PC-3 (cell line): ENCODE measurements at regions of chr17 and their contacts with region 1.

Region 1: GRCh38 chr17:28335201-28335955 is at the starts of genes IFT20 and TNFAIP1:
- DNase-seq: peak; percentile 97
- ATAC-seq: peak; percentile 95
- H3K4me3 ChIP-seq: peak within 1 kb of the TSS; percentile 97
- H3K27ac ChIP-seq: peak within 1 kb of the TSS; percentile 78
- H3K4me1 ChIP-seq: peaks cover 25% of the 10 kb centered on the region
- H3K27me3 ChIP-seq: no peaks in the 10 kb centered on the region
- CTCF ChIP-seq: no peak
- total RNA-seq, gene IFT20: 12.9 and 23.1 TPM in 2 replicates
- total RNA-seq, gene TNFAIP1: 18.8 and 27.5 TPM in 2 replicates

Region 2: DNA sequence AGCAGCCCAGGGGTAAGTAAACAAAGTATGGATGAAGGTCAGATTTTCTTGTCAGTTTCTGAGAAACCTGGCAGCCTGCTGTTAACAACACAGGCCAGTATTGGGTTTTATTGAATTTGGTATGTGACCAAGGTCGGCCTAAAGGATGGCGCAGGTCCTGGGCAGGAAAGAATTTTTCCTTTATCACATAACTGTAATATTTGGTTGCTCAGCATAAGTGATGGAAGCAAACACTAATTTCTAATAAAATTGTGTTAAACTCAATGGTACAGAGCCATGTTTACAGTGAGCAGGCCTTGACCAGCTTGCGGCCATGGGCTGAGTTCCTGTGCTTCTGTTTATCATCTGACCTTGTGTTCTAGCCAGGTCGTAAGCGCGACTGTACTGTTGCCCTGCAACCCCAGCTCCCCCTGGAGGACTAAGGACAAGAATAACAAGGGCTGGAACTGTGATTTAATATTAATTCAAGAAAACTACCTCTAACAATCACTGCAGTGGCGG is 11.4 kb after region 1 on chr17:
- CTCF ChIA-PET with region 1: interaction called, 5 read pairs
- POLR2A ChIA-PET with region 1: interaction called, 14 read pairs
- intact Hi-C with region 1: no loop called
- DNase-seq: no peak
- ATAC-seq: peak; percentile 57
- H3K4me3 ChIP-seq: peak overlapping the region; percentile 36; the same call in 1 of the 2 replicates
- H3K27ac ChIP-seq: peak overlapping the region; percentile 92
- H3K4me1 ChIP-seq: peaks cover 28% of the 10 kb centered on the region
- H3K27me3 ChIP-seq: no peaks in the 10 kb centered on the region
- CTCF ChIP-seq: peak; percentile 37; the same call in 1 of the 2 replicates

Region 3: GRCh38 chr17:28357061-28357900 is 21.9 kb after region 1 on chr17 and contains the start of gene POLDIP2:
- CTCF ChIA-PET with region 1: interaction called, 6 read pairs
- POLR2A ChIA-PET with region 1: interaction called, 12 read pairs
- intact Hi-C with region 1: loop called (anchors 1 kb)
- DNase-seq: peak; percentile 90
- ATAC-seq: peak; percentile 99
- H3K4me3 ChIP-seq: peak within 1 kb of the TSS; percentile 89
- H3K27ac ChIP-seq: peak within 1 kb of the TSS; percentile 36; the same call in 1 of the 2 replicates
- H3K4me1 ChIP-seq: peaks cover 10% of the 10 kb centered on the region; the same call in 1 of the 2 replicates
- H3K27me3 ChIP-seq: no peaks in the 10 kb centered on the region
- CTCF ChIP-seq: no peak
- total RNA-seq, gene POLDIP2: 136 and 137 TPM in 2 replicates